ENCODE measurements at regions of chr19 and their contacts with region 1.

Region 1: DNA sequence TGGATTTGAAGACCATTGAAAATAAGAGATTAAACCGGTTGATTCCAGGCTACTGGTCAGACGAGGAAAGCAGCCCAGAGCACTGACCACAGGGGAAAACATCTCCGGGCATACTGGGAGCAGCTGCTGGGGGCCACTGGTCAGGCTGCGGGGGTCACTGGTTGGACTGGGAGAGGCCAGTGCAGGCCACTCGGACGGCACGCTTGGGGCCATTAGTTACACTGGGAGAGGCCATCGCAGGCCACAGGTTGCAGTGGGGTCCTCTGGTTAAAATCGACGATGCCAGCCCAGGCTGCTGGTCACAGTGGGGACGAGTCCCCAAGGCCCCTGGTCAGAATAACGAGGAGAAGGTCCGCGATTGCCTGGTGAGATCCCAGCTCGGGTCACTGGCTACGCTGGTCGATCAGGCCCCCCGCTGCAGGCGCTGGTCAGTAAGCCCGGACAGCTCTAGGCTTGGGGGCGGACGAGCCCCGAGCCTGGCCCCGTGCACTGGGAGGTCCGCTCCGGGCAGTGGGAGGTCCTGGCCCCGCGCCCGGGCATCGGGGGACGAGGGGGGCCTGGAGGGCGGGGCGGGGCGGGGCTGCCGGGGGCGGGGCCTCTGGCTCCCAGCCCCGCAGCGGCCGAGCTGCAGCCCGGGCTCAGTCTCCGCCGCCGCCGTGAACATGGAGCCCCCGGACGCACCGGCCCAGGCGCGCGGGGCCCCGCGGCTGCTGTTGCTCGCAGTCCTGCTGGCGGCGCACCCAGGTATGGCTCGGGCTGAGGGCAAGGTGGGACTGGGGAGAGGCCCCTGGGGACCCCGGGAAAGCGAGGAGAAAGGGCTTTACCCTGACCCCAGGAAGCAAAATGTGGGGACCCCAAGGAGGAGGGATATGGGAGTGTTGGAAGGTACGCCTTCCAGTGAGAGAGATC is at the start of gene BCAM:
- DNase-seq: peak; percentile 40
- H3K4me3 ChIP-seq: peak within 1 kb of the TSS; percentile 60 to 73 (median 73)
- H3K27ac ChIP-seq: peak within 1 kb of the TSS; percentile 50
- H3K4me1 ChIP-seq: peaks cover 40% of the 10 kb centered on the region
- H3K27me3 ChIP-seq: no peaks in the 10 kb centered on the region
- CTCF ChIP-seq: no peak
- total RNA-seq, gene BCAM: 114 to 120 TPM

Region 2: DNA sequence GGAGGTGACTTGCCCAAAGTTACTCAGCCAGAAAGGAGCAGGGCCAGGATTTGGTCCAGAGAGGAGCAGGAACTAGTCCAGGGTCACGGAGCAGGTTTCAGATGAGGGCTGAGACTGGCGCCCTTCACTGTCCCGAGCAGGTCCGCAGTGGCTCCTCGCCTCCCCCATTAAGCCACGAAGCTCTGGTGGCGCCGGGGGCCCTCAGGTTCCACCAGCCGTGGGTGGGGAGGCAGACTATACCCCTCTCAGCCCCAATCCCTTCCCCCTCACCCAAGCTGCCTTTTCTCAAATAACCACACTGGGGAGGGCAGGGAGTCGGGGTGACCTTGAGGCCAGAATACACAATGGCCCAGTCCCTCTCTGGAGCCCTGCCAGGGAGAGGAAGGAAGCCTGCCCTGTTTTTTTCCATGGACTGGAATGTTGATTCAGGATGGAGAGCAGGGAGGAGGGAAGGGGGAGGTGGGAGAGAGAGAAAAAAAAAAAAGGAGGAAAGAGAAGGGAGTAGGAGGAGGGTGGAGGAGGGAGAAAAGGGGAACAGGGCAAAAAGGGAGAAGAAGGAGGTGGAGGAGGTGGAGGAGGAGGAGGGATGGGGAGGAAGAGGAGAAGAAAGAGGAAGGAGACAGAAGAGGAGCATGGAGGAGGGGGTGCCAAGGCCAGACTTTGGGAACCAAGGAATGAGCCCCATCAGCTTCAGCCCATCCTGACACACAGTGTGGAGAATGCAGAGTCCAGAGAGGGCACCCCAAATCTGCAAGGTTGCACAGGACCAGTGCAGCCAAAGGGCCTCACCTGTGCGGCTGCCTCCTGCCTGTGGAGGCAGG is 90.1 kb before region 1 on chr19:
- CTCF ChIA-PET with region 1: interaction called, 16 read pairs
- dilution Hi-C with region 1: loop called (anchors 5 kb)
- in situ Hi-C with region 1: no loop called
- intact Hi-C with region 1: no loop called
- DNase-seq: no peak
- H3K4me3 ChIP-seq: no peak overlapping the region
- H3K27ac ChIP-seq: no peak overlapping the region
- H3K4me1 ChIP-seq: peaks cover 11% of the 10 kb centered on the region
- H3K27me3 ChIP-seq: no peaks in the 10 kb centered on the region
- CTCF ChIP-seq: no peak

Region 3: DNA sequence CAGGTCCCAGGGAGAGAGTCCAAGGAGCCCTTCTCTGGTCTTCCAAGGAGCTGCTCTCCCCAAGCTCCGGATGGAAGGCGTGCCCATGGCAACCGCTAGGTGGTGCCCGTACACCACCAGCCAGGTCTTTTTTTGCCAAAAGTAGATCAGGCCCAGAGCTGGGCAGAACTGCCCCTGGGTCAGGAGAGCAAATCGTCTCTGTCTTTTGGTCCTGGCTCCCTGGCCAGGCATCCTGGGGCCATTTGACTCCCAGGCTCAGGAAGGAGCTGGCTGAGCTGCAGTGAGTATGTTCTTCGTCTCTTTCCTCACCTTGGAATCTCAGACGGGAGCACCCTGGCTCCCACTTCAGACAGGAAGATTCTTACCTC is 84.8 kb before region 1 on chr19:
- CTCF ChIA-PET with region 1: interaction called, 16 read pairs
- dilution Hi-C with region 1: loop called (anchors 5 kb)
- in situ Hi-C with region 1: no loop called
- intact Hi-C with region 1: no loop called
- DNase-seq: peak; percentile 70
- H3K4me3 ChIP-seq: no peak overlapping the region
- H3K27ac ChIP-seq: no peak overlapping the region
- H3K4me1 ChIP-seq: peaks cover 11% of the 10 kb centered on the region
- H3K27me3 ChIP-seq: no peaks in the 10 kb centered on the region
- CTCF ChIP-seq: peak; percentile 97 to 99

Region 4: GRCh38 chr19:44777715-44778347 is 30.9 kb before region 1 on chr19 and contains the start of gene CBLC:
- CTCF ChIA-PET with region 1: no interaction called
- dilution Hi-C with region 1: no loop called
- in situ Hi-C with region 1: no loop called
- intact Hi-C with region 1: no loop called
- DNase-seq: peak; percentile 94
- H3K4me3 ChIP-seq: peak within 1 kb of the TSS; percentile 87 to 97 (median 91)
- H3K27ac ChIP-seq: peak within 1 kb of the TSS; percentile 93
- H3K4me1 ChIP-seq: peaks cover 57% of the 10 kb centered on the region
- H3K27me3 ChIP-seq: no peaks in the 10 kb centered on the region
- CTCF ChIP-seq: peak in 1 of 2 donors; percentile 39
- total RNA-seq, gene CBLC: 51.2 to 76.7 TPM

Region 5: DNA sequence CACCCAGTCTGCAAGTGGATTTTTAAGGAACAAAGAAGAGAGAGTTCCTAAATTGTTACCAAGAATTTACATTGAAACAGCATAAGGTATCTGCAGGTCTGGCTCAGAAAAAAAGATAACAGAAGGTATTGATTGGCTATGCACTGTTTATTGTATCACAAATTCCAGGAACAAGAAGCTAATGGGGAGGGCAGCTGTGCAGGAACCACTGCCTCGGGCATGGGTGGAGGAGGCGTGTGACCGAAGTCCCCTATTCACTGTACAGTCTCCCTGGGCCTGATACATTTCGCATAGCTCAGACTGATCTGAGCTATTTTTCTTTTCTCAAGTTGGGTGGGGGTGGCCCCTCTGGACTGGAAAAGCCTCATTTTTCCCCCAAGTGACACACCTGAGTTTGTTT is 49.1 kb after region 1 on chr19:
- CTCF ChIA-PET with region 1: no interaction called
- dilution Hi-C with region 1: no loop called
- in situ Hi-C with region 1: no loop called
- intact Hi-C with region 1: no loop called
- DNase-seq: no peak
- H3K4me3 ChIP-seq: no peak overlapping the region
- H3K27ac ChIP-seq: no peak overlapping the region
- H3K4me1 ChIP-seq: no peaks in the 10 kb centered on the region
- H3K27me3 ChIP-seq: no peaks in the 10 kb centered on the region
- CTCF ChIP-seq: no peak

Region 6: GRCh38 chr19:44897835-44898234 is 89.1 kb after region 1 on chr19:
- CTCF ChIA-PET with region 1: no interaction called
- dilution Hi-C with region 1: loop called (anchors 5 kb)
- in situ Hi-C with region 1: no loop called
- intact Hi-C with region 1: loop called (anchors 10 kb)
- DNase-seq: no peak
- H3K4me3 ChIP-seq: no peak overlapping the region
- H3K27ac ChIP-seq: no peak overlapping the region
- H3K4me1 ChIP-seq: no peaks in the 10 kb centered on the region
- H3K27me3 ChIP-seq: no peaks in the 10 kb centered on the region
- CTCF ChIP-seq: no peak

Measured in mammary epithelial cell (primary cell).